Panc1 (cell line): ENCODE measurements at regions of chr17 and their contacts with region 1.

Region 1: DNA sequence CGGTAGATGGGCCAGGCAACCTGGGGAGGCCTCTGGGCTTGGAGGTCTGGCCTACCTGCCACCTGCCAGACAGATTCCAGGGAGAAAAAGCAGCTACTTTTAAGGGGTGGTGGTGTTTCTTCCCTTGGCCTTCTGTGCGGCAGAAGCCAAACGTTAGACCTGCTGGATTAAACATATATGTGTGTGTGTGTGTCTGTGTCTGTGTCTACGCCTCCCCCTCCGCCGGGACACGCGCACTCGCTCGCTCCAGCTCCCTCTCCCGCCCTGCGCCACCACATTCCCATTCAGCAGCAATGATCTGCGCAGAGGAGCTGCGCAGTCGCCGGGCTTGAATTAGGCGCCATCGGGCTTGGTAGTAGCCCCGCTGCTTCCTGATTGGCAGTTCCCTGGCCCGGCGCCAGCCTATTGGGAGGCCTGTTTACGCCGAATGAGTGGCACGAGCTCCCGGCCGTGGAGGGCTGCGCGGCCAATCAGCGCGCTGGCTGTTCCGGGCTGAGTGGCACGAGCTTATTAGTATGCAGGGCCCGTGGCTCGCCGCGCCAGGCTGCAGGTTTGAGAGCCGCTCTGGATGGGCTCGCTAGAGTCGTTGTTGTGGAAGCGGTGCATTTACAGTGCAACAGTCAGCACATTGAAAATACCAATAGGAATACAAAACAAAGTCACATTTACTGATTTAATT is at the start of gene BAHCC1:
- DNase-seq: peak; percentile 92
- ATAC-seq: peak; percentile 70
- H3K4me3 ChIP-seq: peak within 1 kb of the TSS; percentile 78 to 83
- H3K27ac ChIP-seq: peak within 1 kb of the TSS; percentile 96
- H3K4me1 ChIP-seq: peaks cover 36% of the 10 kb centered on the region
- H3K27me3 ChIP-seq: no peaks in the 10 kb centered on the region
- CTCF ChIP-seq: no peak
- total RNA-seq, gene BAHCC1: 77.4 TPM

Region 2: GRCh38 chr17:81148571-81148970 is 246.5 kb before region 1 on chr17:
- CTCF ChIA-PET with region 1: no interaction called
- POLR2A ChIA-PET with region 1: interaction called, 12 read pairs
- in situ Hi-C with region 1: no loop called
- intact Hi-C with region 1: no loop called
- DNase-seq: no peak
- ATAC-seq: no peak
- H3K4me3 ChIP-seq: no peak overlapping the region
- H3K27ac ChIP-seq: no peak overlapping the region
- H3K4me1 ChIP-seq: no peaks in the 10 kb centered on the region
- H3K27me3 ChIP-seq: no peaks in the 10 kb centered on the region
- CTCF ChIP-seq: no peak

Region 3: DNA sequence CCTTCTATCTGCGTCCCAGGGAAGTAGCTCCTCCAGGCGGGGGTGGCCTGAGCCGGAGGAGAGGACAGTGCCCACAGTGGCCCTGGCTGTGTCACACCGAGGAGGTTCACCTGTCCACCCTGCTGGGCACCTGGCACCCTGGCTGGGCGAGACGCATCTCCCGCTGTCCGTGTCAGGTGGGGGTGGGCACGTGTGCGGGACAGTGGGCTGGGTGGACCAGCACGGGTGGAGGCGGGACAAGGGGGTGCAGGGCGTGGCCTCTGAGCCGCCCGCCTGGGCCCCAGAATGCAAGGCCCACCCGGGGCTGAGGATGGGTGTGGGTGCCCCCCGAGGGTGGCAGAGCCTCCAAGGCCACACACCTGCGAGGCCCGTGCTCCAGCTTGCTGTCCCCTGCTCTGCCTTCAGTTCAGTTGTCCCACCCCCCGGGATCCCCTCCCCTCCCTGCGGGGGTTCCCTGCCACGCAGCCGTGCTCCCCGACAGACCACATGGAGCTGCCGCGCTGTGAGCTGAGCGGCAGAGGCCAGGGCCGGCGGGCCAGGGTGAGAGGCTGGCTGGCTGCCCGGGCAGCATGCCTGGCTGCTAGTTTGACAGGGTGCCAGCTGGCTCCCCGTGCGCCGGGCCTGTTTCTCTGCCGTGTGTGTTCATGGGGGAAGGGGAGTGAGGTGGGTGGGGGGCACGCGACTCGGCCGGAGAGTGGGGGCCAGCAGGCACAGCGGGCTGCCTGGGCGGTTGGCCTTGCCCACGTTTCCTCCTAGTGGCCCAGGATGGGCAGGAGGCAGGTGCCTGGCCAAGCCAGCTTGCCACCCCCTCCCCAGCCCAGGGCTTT is 34.1 kb after region 1 on chr17:
- CTCF ChIA-PET with region 1: interaction called, 4 read pairs
- POLR2A ChIA-PET with region 1: interaction called, 20 read pairs
- in situ Hi-C with region 1: no loop called
- intact Hi-C with region 1: no loop called
- DNase-seq: no peak
- ATAC-seq: peak; percentile 72
- H3K4me3 ChIP-seq: no peak overlapping the region
- H3K27ac ChIP-seq: peak overlapping the region; percentile 83
- H3K4me1 ChIP-seq: peaks cover 67% of the 10 kb centered on the region
- H3K27me3 ChIP-seq: no peaks in the 10 kb centered on the region
- CTCF ChIP-seq: no peak

Region 4: DNA sequence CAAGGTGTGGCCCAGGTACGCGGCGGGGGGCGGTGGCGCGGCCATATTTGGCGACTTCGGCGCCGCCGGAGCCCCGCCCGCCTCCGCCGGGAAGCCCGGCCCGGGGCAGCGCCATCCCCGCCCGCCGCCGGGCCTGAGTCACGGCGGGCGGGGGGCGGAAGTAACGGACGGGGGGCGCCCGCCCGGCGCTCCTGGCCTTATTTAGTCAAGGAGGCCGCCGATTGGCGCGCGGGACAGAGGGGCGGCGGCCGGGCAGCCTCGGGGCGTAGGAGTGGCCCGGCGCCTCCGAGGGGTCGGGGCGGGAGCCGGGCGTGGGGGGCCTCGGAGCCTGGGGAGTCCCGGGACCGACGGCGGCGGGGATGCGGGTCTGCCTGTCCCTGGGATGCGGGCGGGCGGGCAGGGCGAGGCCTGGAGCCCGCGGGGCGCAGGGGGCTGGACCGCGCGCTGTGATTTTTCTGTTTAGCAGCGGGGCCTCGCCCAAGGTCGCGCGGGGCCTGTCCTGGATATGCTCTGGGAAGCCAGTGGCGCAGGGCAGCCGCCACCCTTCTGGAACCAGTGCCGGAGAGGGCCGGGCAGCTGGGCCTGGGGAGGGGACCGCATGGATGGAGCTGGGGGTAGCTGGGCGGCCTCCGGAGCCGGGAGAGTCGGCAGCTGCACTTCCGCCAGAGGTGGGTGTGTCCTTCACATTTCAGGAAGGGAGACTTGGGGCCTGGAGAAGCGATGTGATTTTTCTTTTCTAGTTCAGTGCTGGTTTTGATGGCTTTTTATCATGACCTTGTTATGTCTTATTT is 119.9 kb after region 1 on chr17:
- CTCF ChIA-PET with region 1: no interaction called
- POLR2A ChIA-PET with region 1: interaction called, 5 read pairs
- in situ Hi-C with region 1: no loop called
- intact Hi-C with region 1: loop called (anchors 5 kb)
- DNase-seq: no peak
- ATAC-seq: peak; percentile 35
- H3K4me3 ChIP-seq: peak overlapping the region; percentile 68 to 82
- H3K27ac ChIP-seq: peak overlapping the region; percentile 93
- H3K4me1 ChIP-seq: peaks cover 32% of the 10 kb centered on the region
- H3K27me3 ChIP-seq: no peaks in the 10 kb centered on the region
- CTCF ChIP-seq: no peak

Region 5: DNA sequence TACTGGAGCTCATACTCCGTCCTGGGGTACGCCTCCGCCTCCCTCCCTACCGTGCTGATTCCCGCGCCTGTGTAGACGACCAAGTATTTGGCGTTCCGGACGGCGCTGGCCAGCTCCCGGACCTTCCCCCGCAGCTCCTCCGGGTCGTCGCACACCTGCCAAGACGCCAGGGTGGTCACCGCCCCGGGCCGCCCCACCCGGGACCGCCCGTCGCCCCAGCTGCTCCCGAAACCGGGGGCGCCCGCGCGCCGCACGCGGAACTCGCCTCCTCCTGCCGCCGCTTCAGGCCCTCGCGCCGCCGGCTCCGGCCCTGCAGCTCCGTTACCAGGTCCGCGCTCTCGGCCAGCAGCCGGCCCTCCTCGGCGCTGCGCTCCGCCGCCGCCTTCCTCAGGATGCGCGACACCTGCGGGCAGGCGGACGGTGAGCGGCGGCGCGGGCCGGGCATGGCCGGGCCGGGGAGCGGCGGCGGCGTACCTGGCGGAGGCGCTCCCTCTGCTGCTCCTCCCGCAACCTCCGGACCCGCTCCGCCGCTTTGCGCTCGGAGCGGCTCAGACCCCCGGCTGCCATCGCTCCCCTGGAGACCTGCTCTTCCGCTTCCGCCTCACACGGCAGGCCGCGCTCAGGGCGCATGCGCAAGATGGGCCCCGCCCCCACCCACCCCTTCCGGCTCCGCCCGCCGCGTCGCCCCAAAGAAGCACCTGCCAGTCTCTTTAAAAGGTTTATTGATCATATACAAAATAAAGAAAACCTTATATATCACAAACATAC is 522.7 kb after region 1 on chr17 and contains the start of gene SIRT7:
- CTCF ChIA-PET with region 1: no interaction called
- POLR2A ChIA-PET with region 1: interaction called, 10 read pairs
- in situ Hi-C with region 1: no loop called
- intact Hi-C with region 1: no loop called
- DNase-seq: no peak
- ATAC-seq: peak; percentile 78
- H3K4me3 ChIP-seq: peak within 1 kb of the TSS; percentile 72 to 80
- H3K27ac ChIP-seq: peak within 1 kb of the TSS; percentile 92
- H3K4me1 ChIP-seq: peaks cover 53% of the 10 kb centered on the region
- H3K27me3 ChIP-seq: no peaks in the 10 kb centered on the region
- CTCF ChIP-seq: no peak
- total RNA-seq, gene SIRT7: 82.5 TPM

Region 6: GRCh38 chr17:82193520-82194220 is 798.6 kb after region 1 on chr17:
- CTCF ChIA-PET with region 1: no interaction called
- POLR2A ChIA-PET with region 1: no interaction called
- in situ Hi-C with region 1: no loop called
- intact Hi-C with region 1: no loop called
- DNase-seq: no peak
- ATAC-seq: no peak
- H3K4me3 ChIP-seq: no peak overlapping the region
- H3K27ac ChIP-seq: no peak overlapping the region
- H3K4me1 ChIP-seq: no peaks in the 10 kb centered on the region
- H3K27me3 ChIP-seq: no peaks in the 10 kb centered on the region
- CTCF ChIP-seq: no peak